ENCODE measurements at regions of chr4 and their contacts with region 1.

Region 1: GRCh38 chr4:88230969-88231771 is 53.2 kb downstream of the PPM1K start:
- DNase-seq: peak in 2 of 42 donors; percentile 15 to 41

Region 2: DNA sequence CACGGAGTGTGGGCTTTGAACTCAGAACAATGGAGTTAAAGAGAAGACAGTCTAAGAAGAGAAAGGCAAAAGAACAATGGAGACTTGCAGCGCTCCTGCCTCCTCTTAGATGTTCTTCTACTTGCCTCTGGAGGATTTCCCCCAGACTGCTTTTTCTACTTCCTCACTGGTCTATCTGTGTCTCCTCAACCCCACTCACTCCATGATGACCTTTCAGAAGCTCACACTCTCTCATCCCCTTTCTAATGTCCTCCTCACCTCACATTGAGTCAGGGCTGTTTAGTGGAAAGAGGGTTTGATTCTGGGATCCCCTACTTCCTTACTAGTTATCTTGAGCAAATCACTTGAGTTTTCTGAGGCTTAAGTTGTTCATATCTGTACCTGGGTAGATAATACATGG is 135.3 kb after region 1 on chr4:
- intact Hi-C with region 1: loop called (anchors 5 kb)
- DNase-seq: no peak